Activated naive CD4-positive, alpha-beta T cell treated with anti-CD3 and anti-CD28 coated beads for 36 hours (primary cell): ENCODE measurements at regions of chr10 and their contacts with region 1.

Region 1: GRCh38 chr10:109978481-109978880 is 29.3 kb upstream of the ADD3 start:
- DNase-seq: peak; percentile 87
- H3K4me3 Mint-ChIP-seq: no peak overlapping the region
- H3K27ac Mint-ChIP-seq: no peak overlapping the region
- H3K4me1 Mint-ChIP-seq: peaks cover 14% of the 10 kb centered on the region
- H3K27me3 Mint-ChIP-seq: no peaks in the 10 kb centered on the region

Region 2: DNA sequence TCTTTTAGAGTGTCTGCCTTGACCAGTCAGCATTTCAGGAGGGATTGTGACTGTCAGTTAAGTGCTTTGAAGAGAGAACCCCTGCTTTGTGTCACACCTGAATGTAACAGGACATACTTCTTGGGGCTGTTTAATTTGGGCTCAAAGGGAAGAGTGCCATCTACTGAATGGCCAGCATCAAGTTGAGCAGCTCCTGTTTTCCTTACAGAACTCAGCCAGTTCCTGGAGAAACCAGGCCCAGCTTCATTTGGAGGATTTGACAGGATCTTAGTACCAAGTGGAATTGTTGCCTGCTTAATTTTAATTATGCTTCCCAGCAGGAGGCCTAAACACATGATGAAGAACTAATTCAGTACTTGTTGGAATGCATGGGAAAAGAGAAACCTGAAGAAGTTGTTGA is 37.6 kb after region 1 on chr10:
- CTCF ChIA-PET with region 1: interaction called, 12 read pairs
- intact Hi-C with region 1: loop called (anchors 1 kb)
- DNase-seq: no peak
- H3K4me3 Mint-ChIP-seq: no peak overlapping the region
- H3K27ac Mint-ChIP-seq: peak overlapping the region; percentile 75
- H3K4me1 Mint-ChIP-seq: peaks cover 77% of the 10 kb centered on the region
- H3K27me3 Mint-ChIP-seq: no peaks in the 10 kb centered on the region

Region 3: GRCh38 chr10:110076559-110077318 is 98.3 kb after region 1 on chr10:
- CTCF ChIA-PET with region 1: interaction called, 5 read pairs
- intact Hi-C with region 1: loop called (anchors 1 kb)
- DNase-seq: no peak
- H3K4me3 Mint-ChIP-seq: peak overlapping the region; percentile 70
- H3K27ac Mint-ChIP-seq: peak overlapping the region; percentile 92
- H3K4me1 Mint-ChIP-seq: peaks cover 87% of the 10 kb centered on the region
- H3K27me3 Mint-ChIP-seq: no peaks in the 10 kb centered on the region

Region 4: GRCh38 chr10:110279407-110279986 is 301.0 kb after region 1 on chr10:
- CTCF ChIA-PET with region 1: interaction called, 4 read pairs
- intact Hi-C with region 1: loop called (anchors 1 kb)
- DNase-seq: peak; percentile 69
- H3K4me3 Mint-ChIP-seq: no peak overlapping the region
- H3K27ac Mint-ChIP-seq: no peak overlapping the region
- H3K4me1 Mint-ChIP-seq: peaks cover 18% of the 10 kb centered on the region
- H3K27me3 Mint-ChIP-seq: no peaks in the 10 kb centered on the region

Region 5: GRCh38 chr10:110547139-110547761 is 568.8 kb after region 1 on chr10:
- CTCF ChIA-PET with region 1: no interaction called
- intact Hi-C with region 1: no loop called
- DNase-seq: no peak
- H3K4me3 Mint-ChIP-seq: no peak overlapping the region
- H3K27ac Mint-ChIP-seq: no peak overlapping the region
- H3K4me1 Mint-ChIP-seq: peaks cover 6% of the 10 kb centered on the region
- H3K27me3 Mint-ChIP-seq: peaks cover 19% of the 10 kb centered on the region